Dorsolateral prefrontal cortex (tissue), 120 donors: ENCODE measurements at regions of chr19 and their contacts with region 1.

Region 1: GRCh38 chr19:44845612-44846454 is at the start of gene NECTIN2:
- DNase-seq: peak; percentile 42 to 91 (median 84)
- H3K4me3 ChIP-seq: peak within 1 kb of the TSS; percentile 59 to 91 (median 76)
- H3K27ac ChIP-seq: peak within 1 kb of the TSS in 55 of 59 donors; percentile 39 to 93 (median 75)
- H3K27me3 ChIP-seq: peaks cover 0 to 8% (median 0%) of the 10 kb centered on the region in 45 donors
- CTCF ChIP-seq: peak in 53 of 56 donors; percentile 21 to 65 (median 51)
- total RNA-seq, gene NECTIN2: 11.4 to 44.7 (median 20.5) TPM

Region 2: DNA sequence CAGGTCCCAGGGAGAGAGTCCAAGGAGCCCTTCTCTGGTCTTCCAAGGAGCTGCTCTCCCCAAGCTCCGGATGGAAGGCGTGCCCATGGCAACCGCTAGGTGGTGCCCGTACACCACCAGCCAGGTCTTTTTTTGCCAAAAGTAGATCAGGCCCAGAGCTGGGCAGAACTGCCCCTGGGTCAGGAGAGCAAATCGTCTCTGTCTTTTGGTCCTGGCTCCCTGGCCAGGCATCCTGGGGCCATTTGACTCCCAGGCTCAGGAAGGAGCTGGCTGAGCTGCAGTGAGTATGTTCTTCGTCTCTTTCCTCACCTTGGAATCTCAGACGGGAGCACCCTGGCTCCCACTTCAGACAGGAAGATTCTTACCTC is 121.9 kb before region 1 on chr19:
- intact Hi-C with region 1: loop called (anchors 5 to 10 kb)
- DNase-seq: peak in 9 of 10 donors; percentile 50 to 85 (median 69)
- H3K4me3 ChIP-seq: no peak overlapping the region
- H3K27ac ChIP-seq: no peak overlapping the region
- H3K27me3 ChIP-seq: peaks cover 0 to 9% (median 0%) of the 10 kb centered on the region in 45 donors
- CTCF ChIP-seq: peak; percentile 87 to 100 (median 98)

Region 3: GRCh38 chr19:44782729-44783128 is 63.1 kb before region 1 on chr19:
- intact Hi-C with region 1: loop called in 1 of 2 experiments (anchors 1 kb)
- DNase-seq: no peak
- H3K4me3 ChIP-seq: no peak overlapping the region
- H3K27ac ChIP-seq: no peak overlapping the region
- H3K27me3 ChIP-seq: peaks cover 0 to 20% (median 4%) of the 10 kb centered on the region in 45 donors
- CTCF ChIP-seq: no peak

Region 4: DNA sequence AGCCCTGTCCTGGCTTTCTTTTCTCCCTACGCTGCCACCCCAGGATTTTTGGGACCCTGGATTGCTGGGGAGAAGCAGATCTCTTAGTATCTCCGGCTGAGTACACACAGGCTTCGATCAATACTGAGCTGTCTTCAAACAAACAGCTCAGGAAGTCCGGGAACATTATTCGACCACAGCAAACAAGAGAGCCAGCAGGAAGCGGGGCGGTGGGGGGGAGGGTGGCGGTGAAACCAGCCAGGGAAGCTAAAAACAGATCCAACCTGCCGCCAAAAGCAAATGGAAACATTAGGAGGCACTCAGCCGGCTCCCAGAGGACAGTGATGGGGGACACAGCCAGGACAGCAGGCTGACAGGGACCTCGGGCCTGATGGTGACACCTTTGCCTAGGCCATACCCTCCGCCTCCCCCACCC is 49.1 kb before region 1 on chr19:
- intact Hi-C with region 1: loop called (anchors 2 to 5 kb)
- DNase-seq: no peak
- H3K4me3 ChIP-seq: no peak overlapping the region
- H3K27ac ChIP-seq: peak overlapping the region in 39 of 59 donors; percentile 2 to 81 (median 53)
- H3K27me3 ChIP-seq: no peaks in the 10 kb centered on the region
- CTCF ChIP-seq: no peak

Region 5: GRCh38 chr19:44808463-44809371 is 37.1 kb before region 1 on chr19 and contains the start of gene BCAM:
- intact Hi-C with region 1: loop called in 1 of 2 experiments (anchors 5 kb)
- DNase-seq: peak in 2 of 10 donors; percentile 42 to 64
- H3K4me3 ChIP-seq: peak within 1 kb of the TSS; percentile 20 to 70 (median 55)
- H3K27ac ChIP-seq: peak within 1 kb of the TSS in 32 of 59 donors; percentile 2 to 70 (median 45)
- H3K27me3 ChIP-seq: peaks cover 0 to 5% (median 0%) of the 10 kb centered on the region in 45 donors
- CTCF ChIP-seq: peak in 2 of 56 donors; percentile 0 to 8
- total RNA-seq, gene BCAM: 9.2 to 58.9 (median 22.6) TPM